Gastrocnemius medialis (tissue), 4 donors: ENCODE measurements at regions of chr2 and their contacts with region 1.

Region 1: DNA sequence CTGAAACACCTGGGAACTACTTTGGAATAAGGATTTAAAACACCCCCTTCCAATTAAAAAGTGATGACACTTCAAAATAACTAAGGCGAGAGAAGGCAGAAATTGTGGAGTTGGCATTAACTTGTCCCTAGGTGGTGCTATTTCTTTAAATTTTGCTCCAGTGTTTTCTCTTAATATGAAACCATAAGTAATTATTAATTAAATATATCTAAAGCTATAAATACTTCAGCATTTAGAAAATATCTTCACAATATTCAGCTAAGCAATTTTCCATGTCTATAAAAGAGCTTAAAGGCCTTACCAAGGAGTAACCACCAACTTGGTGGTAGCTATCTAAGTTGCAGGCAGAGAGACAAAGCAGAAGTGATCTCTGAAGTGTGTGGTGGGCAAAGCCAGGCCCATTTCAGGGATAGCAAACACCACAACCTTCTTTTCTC is 186.8 kb upstream of the PGAP1 start:
- DNase-seq: no peak
- ATAC-seq: no peak
- H3K4me3 ChIP-seq: no peak overlapping the region
- H3K27ac ChIP-seq: no peak overlapping the region
- H3K4me1 ChIP-seq: peaks cover 8 to 9% of the 10 kb centered on the region in 2 donors
- H3K27me3 ChIP-seq: no peaks in the 10 kb centered on the region
- CTCF ChIP-seq: peak; percentile 22 to 66 (median 47)
- POLR2A ChIP-seq: no peak

Region 2: GRCh38 chr2:197011799-197012641 is 101.3 kb before region 1 on chr2:
- in situ Hi-C with region 1: no loop called
- intact Hi-C with region 1: loop called (anchors 5 kb)
- DNase-seq: no peak
- ATAC-seq: peak; percentile 56 to 75
- H3K4me3 ChIP-seq: no peak overlapping the region
- H3K27ac ChIP-seq: no peak overlapping the region
- H3K4me1 ChIP-seq: peaks cover 0 to 3% of the 10 kb centered on the region in 2 donors
- H3K27me3 ChIP-seq: no peaks in the 10 kb centered on the region
- CTCF ChIP-seq: peak; percentile 58 to 77 (median 64)
- POLR2A ChIP-seq: no peak

Region 3: DNA sequence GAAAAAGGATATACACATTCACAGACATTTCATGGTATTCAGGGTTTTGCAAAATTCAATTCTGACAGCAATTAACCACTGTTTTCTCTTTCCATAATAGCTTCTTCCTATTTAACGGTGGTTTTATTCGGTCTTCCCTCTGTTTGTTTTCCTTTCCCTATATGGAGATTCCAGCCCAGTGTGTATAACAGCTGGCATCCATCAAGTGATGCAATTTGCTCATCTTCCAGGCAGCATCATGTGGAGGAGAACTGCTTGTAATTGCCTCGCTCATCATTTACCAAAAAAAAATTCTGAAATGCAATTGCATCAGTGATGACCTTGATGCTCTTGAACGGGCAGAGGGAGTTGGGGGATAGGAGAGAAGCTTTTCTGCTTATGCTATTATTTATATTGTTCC is 20.9 kb before region 1 on chr2:
- in situ Hi-C with region 1: no loop called
- intact Hi-C with region 1: no loop called
- DNase-seq: no peak
- ATAC-seq: peak; percentile 68 to 79
- H3K4me3 ChIP-seq: no peak overlapping the region
- H3K27ac ChIP-seq: no peak overlapping the region
- H3K4me1 ChIP-seq: no peaks in the 10 kb centered on the region
- H3K27me3 ChIP-seq: no peaks in the 10 kb centered on the region
- CTCF ChIP-seq: no peak
- POLR2A ChIP-seq: no peak

Region 4: GRCh38 chr2:197179744-197180498 is 66.6 kb after region 1 on chr2:
- in situ Hi-C with region 1: loop called in 1 of 4 experiments (anchors 10 kb)
- intact Hi-C with region 1: no loop called
- DNase-seq: peak in 1 of 2 donors; percentile 19
- ATAC-seq: no peak
- H3K4me3 ChIP-seq: no peak overlapping the region
- H3K27ac ChIP-seq: no peak overlapping the region
- H3K4me1 ChIP-seq: peaks cover 20 to 27% of the 10 kb centered on the region in 2 donors
- H3K27me3 ChIP-seq: no peaks in the 10 kb centered on the region
- CTCF ChIP-seq: no peak
- POLR2A ChIP-seq: no peak

Region 5: DNA sequence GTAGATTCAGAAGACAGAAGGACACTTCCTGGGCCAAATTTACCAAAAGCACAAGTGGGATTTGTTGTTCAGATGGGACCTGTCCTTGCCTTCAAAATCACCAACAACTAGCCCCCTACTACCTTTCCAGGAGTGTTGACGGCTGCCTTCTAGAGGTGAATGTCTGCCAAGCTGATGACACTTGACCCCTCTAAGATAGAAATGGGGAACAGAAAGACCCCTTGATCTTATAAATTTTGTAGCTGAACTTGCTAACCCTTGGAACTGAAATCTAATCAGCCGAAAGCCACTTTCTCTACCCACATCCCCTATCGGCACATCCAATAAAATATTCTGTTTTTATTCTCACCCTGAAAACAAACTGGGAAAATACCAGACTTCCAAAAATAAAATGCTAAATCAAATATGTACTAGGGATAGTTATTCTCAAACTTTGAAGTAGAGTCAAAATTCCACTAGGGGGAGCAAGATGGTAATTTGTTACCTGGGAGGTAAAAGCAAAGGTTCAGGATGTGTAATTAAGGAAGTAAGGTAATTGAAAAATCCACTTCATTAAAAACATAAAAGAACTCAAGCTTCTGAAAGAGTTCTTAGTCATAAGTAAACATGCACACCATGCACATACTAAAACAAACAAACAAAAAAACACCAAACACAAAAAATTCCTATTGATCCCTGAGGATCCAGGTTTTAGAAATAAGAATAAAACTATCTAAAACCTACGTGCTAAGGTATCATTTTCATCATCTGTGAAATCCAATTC is 78.1 kb after region 1 on chr2:
- in situ Hi-C with region 1: no loop called
- intact Hi-C with region 1: loop called (anchors 5 kb)
- DNase-seq: no peak
- ATAC-seq: peak; percentile 49 to 56
- H3K4me3 ChIP-seq: no peak overlapping the region
- H3K27ac ChIP-seq: no peak overlapping the region
- H3K4me1 ChIP-seq: peaks cover 8 to 12% of the 10 kb centered on the region in 2 donors
- H3K27me3 ChIP-seq: no peaks in the 10 kb centered on the region
- CTCF ChIP-seq: peak; percentile 61 to 82 (median 65)
- POLR2A ChIP-seq: no peak

Region 6: DNA sequence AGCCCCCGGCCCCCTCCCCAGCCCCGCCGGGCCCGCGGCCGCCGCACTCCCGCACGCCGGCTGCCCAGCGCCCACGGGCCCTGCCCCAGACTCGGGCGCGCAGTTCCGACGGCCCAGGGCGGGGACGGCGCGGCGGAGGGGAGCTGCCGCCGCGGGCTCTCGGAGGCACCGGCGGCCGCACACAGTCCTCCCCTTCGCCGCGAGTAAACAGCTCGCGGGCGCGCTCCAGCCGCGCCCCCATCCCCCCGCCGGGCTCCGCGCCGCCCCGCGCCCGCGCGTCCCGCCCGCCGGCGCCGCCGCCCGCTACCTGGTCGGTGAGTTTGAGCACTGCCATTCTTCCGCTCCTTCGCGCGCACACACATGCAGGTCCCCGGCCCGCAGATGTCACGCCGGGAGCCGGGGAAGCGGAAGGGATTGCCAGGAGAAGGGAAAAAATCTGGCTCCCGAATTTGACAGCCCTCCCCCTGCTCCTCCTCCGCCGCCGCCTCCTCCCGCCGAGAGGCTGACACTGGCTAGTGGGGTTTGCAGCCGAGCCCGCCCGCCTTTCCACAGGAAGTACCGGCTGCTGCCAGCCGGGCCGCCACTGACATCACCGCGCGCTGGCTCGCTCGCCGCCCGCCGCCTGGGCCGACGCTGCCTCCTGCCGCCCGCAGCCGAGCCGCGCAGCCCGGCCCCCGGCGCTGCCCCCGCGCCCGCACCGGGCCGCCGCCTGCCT is 197.1 kb after region 1 on chr2 and contains the start of gene ANKRD44:
- in situ Hi-C with region 1: loop called in 3 of 4 experiments (anchors 5 to 10 kb)
- intact Hi-C with region 1: loop called (anchors 1 kb)
- DNase-seq: peak; percentile 82 to 87
- ATAC-seq: peak; percentile 72 to 81
- H3K4me3 ChIP-seq: peak within 1 kb of the TSS; percentile 60 to 85 (median 70)
- H3K27ac ChIP-seq: peak within 1 kb of the TSS; percentile 65 to 80 (median 70)
- H3K4me1 ChIP-seq: peaks cover 23 to 29% of the 10 kb centered on the region in 2 donors
- H3K27me3 ChIP-seq: no peaks in the 10 kb centered on the region
- CTCF ChIP-seq: peak; percentile 44 to 76 (median 57)
- POLR2A ChIP-seq: peak; percentile 79 to 85
- total RNA-seq, gene ANKRD44: 1.8 to 6.3 (median 3.0) TPM

Region 7: DNA sequence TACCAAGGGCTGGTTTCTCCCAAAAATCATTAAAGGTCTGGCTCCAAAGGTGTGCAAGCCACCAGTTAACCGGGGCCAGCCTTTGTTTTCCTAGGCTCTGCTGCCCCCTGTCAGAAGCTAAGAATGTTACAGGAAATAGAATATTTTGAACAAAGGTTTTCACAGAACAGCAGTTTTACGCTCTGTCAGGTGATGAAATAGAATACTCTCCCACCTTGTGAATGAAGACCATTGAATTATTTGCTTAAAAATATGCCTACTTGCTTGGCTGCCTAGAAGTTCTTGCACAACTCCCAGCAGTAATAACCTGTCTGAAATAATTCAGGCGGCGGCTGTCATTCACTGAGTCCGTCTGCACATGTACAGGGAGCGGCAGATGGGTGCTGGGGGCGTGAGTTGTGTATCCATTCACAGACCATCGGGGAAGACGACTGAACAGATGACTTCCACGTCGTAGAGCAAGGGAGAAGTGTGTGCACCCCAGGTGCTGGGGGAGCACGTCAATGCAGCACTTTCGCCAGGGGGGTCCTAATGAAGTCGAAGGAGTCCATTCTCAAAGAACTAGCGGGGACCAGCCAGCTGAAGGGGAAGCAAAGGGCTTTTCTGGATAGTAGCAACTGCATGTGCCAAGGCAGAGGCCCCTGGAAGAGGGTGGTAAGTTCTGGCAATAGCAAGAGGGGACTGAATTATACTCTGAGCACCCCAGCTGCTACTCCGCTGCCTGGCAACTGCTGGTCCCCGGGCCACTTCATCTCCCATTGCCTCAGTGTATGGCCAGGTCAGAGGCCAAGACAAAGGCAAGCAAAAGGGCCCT is 265.4 kb after region 1 on chr2:
- in situ Hi-C with region 1: loop called (anchors 5 to 10 kb)
- intact Hi-C with region 1: loop called (anchors 1 kb)
- DNase-seq: peak in 1 of 2 donors; percentile 8
- ATAC-seq: peak; percentile 70 to 86
- H3K4me3 ChIP-seq: no peak overlapping the region
- H3K27ac ChIP-seq: no peak overlapping the region
- H3K4me1 ChIP-seq: no peaks in the 10 kb centered on the region
- H3K27me3 ChIP-seq: no peaks in the 10 kb centered on the region
- CTCF ChIP-seq: peak; percentile 72 to 78 (median 76)
- POLR2A ChIP-seq: no peak

Region 8: GRCh38 chr2:197383823-197384222 is 270.5 kb after region 1 on chr2:
- in situ Hi-C with region 1: loop called (anchors 5 to 10 kb)
- intact Hi-C with region 1: no loop called
- DNase-seq: no peak
- ATAC-seq: no peak
- H3K4me3 ChIP-seq: no peak overlapping the region
- H3K27ac ChIP-seq: no peak overlapping the region
- H3K4me1 ChIP-seq: no peaks in the 10 kb centered on the region
- H3K27me3 ChIP-seq: no peaks in the 10 kb centered on the region
- CTCF ChIP-seq: no peak
- POLR2A ChIP-seq: no peak